ENCODE measurements at regions of chr22 and their contacts with region 1.

Region 1: GRCh38 chr22:35299673-35300497 is at the start of gene TOM1:
- DNase-seq: peak; percentile 98
- H3K4me3 ChIP-seq: peak within 1 kb of the TSS; percentile 66 to 88 (median 82)
- H3K27ac ChIP-seq: peak within 1 kb of the TSS; percentile 92 to 99 (median 94)
- H3K4me1 ChIP-seq: peaks cover 0 to 25% (median 20%) of the 10 kb centered on the region in 4 donors
- H3K27me3 ChIP-seq: no peaks in the 10 kb centered on the region
- CTCF ChIP-seq: no peak
- EP300 ChIP-seq: peak in 1 of 4 donors; percentile 6
- POLR2A ChIP-seq: peak; percentile 72 to 74
- total RNA-seq, gene TOM1: 32.5 to 66.5 (median 48.5) TPM

Region 2: DNA sequence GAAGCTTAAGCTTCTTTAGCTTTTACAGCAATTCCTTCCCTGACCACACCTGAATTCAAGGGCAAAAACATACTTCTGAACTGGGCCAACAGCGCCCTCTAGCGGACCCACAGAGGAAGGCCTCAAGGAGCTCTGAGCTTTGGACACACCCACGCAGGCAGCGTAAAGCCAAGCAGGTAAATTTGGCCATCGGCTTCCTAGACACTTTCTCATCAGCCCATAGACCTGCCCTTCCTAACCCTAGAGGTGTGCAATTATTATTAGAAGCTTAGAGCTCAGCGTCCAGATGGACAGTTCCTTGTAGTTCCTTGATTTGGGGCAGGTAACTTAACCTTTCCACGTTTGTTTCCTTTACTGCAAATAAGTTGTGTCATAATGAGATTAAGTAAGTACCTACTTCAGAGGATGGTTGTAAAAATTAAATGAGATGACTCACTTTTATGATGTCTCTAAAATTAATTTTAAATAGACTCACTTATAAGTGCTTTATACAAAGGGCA is 68.2 kb before region 1 on chr22:
- intact Hi-C with region 1: no loop called
- DNase-seq: no peak
- H3K4me3 ChIP-seq: no peak overlapping the region
- H3K27ac ChIP-seq: no peak overlapping the region
- H3K4me1 ChIP-seq: no peaks in the 10 kb centered on the region
- H3K27me3 ChIP-seq: peaks cover 0 to 14% (median 0%) of the 10 kb centered on the region in 3 donors
- CTCF ChIP-seq: peak; percentile 25 to 71 (median 64)
- EP300 ChIP-seq: no peak
- POLR2A ChIP-seq: no peak

Region 3: GRCh38 chr22:35257321-35258190 is 42.3 kb before region 1 on chr22 and contains the start of gene HMGXB4:
- intact Hi-C with region 1: loop called (anchors 5 kb)
- DNase-seq: peak; percentile 92
- H3K4me3 ChIP-seq: peak within 1 kb of the TSS; percentile 57 to 95 (median 76)
- H3K27ac ChIP-seq: peak within 1 kb of the TSS; percentile 88 to 97 (median 96)
- H3K4me1 ChIP-seq: peaks cover 0 to 21% (median 13%) of the 10 kb centered on the region in 4 donors
- H3K27me3 ChIP-seq: no peaks in the 10 kb centered on the region
- CTCF ChIP-seq: no peak
- EP300 ChIP-seq: no peak
- POLR2A ChIP-seq: no peak
- total RNA-seq, gene HMGXB4: 14.8 to 20.9 (median 16.9) TPM

Region 4: GRCh38 chr22:35367301-35367886 is 67.5 kb after region 1 on chr22:
- intact Hi-C with region 1: no loop called
- DNase-seq: no peak
- H3K4me3 ChIP-seq: no peak overlapping the region
- H3K27ac ChIP-seq: no peak overlapping the region
- H3K4me1 ChIP-seq: peaks cover 0 to 12% (median 7%) of the 10 kb centered on the region in 4 donors
- H3K27me3 ChIP-seq: peaks cover 0 to 34% (median 11%) of the 10 kb centered on the region in 3 donors
- CTCF ChIP-seq: no peak
- EP300 ChIP-seq: no peak
- POLR2A ChIP-seq: no peak

Region 5: GRCh38 chr22:35538775-35539321 is 239.0 kb after region 1 on chr22:
- intact Hi-C with region 1: no loop called
- DNase-seq: no peak
- H3K4me3 ChIP-seq: no peak overlapping the region
- H3K27ac ChIP-seq: peak overlapping the region; percentile 77 to 94 (median 88)
- H3K4me1 ChIP-seq: peaks cover 0 to 45% (median 33%) of the 10 kb centered on the region in 4 donors
- H3K27me3 ChIP-seq: peaks cover 0 to 3% (median 0%) of the 10 kb centered on the region in 3 donors
- CTCF ChIP-seq: peak; percentile 34 to 55 (median 44)
- EP300 ChIP-seq: no peak
- POLR2A ChIP-seq: no peak

Measured in sigmoid colon (tissue), 7 donors.